HCT116 (cell line): ENCODE measurements at regions of chr3 and their contacts with region 1.

Region 1: DNA sequence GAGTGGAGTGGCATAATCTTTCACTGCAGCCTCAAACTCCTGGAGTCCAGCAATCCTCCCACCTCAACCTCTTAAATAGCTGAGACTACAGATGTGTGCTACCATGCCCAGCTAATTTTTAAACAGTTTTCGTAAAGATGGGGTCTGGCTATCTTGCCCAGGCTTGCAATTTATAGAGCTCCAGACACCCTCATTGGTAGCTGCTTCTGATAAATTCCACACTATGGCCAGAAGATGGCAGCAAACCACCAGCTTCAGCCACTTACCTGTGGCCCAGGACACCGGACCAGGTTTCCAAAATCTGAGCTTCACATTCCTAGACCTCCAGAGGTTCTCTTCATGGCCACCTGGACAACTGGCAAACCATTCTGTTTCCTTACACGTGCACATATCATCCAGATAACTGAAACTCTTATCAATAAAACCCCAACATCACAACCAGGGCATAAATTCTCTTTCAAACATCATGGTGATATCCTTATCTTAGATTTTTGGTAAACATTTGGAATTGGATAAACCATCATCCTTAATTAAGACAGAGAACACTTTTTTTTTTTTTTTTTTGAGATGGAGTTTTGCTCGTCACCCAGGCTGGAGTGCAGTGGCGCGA is 28.9 kb downstream of the FBXW12 start:
- DNase-seq: peak; percentile 69
- ATAC-seq: peak; percentile 80
- H3K4me3 ChIP-seq: no peak overlapping the region
- H3K27ac ChIP-seq: no peak overlapping the region
- H3K4me1 ChIP-seq: peaks cover 14 to 39% of the 10 kb centered on the region in 2 experiments
- H3K27me3 ChIP-seq: no peaks in the 10 kb centered on the region
- CTCF ChIP-seq: peak; percentile 69 to 97 (median 83)
- POLR2A ChIP-seq: no peak
- RAD21 ChIP-seq: peak; percentile 97

Region 2: GRCh38 chr3:48194446-48195071 is 206.4 kb before region 1 on chr3:
- CTCF ChIA-PET with region 1: interaction called, 11 read pairs
- POLR2A ChIA-PET with region 1: no interaction called
- RAD21 ChIA-PET with region 1: interaction called, 3 to 6 read pairs
- intact Hi-C with region 1: no loop called
- DNase-seq: peak; percentile 48
- ATAC-seq: peak; percentile 90
- H3K4me3 ChIP-seq: no peak overlapping the region
- H3K27ac ChIP-seq: no peak overlapping the region
- H3K4me1 ChIP-seq: peaks cover 5 to 16% of the 10 kb centered on the region in 2 experiments; a peak in 3 of 4 replicates
- H3K27me3 ChIP-seq: no peaks in the 10 kb centered on the region
- CTCF ChIP-seq: peak; percentile 81 to 94 (median 90); a peak in 5 of 6 replicates
- POLR2A ChIP-seq: no peak
- RAD21 ChIP-seq: peak; percentile 87

Region 3: DNA sequence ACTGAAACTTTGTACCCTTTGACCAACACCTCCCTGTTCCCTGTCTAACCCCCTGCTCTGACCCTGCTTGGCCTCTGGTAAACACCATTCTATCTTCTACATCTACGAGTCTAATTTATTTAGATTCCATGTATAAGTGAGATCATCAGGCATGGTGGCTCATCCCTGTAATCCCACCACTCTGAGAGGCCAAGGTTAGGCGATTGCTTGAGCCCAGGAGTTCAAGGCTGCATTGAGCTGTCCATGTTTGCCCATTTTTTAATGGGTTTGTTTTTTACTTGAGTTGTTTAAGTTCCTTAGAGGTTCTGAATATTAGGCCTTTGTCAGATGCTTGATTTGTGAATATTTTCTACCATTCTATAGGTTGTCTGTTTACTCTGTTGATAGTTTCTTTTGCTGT is 12.0 kb before region 1 on chr3:
- CTCF ChIA-PET with region 1: interaction called, 11 read pairs
- POLR2A ChIA-PET with region 1: no interaction called
- RAD21 ChIA-PET with region 1: no interaction called
- intact Hi-C with region 1: no loop called
- DNase-seq: no peak
- ATAC-seq: no peak
- H3K4me3 ChIP-seq: no peak overlapping the region
- H3K27ac ChIP-seq: no peak overlapping the region
- H3K4me1 ChIP-seq: no peaks in the 10 kb centered on the region
- H3K27me3 ChIP-seq: no peaks in the 10 kb centered on the region
- CTCF ChIP-seq: no peak
- POLR2A ChIP-seq: no peak
- RAD21 ChIP-seq: no peak

Region 4: DNA sequence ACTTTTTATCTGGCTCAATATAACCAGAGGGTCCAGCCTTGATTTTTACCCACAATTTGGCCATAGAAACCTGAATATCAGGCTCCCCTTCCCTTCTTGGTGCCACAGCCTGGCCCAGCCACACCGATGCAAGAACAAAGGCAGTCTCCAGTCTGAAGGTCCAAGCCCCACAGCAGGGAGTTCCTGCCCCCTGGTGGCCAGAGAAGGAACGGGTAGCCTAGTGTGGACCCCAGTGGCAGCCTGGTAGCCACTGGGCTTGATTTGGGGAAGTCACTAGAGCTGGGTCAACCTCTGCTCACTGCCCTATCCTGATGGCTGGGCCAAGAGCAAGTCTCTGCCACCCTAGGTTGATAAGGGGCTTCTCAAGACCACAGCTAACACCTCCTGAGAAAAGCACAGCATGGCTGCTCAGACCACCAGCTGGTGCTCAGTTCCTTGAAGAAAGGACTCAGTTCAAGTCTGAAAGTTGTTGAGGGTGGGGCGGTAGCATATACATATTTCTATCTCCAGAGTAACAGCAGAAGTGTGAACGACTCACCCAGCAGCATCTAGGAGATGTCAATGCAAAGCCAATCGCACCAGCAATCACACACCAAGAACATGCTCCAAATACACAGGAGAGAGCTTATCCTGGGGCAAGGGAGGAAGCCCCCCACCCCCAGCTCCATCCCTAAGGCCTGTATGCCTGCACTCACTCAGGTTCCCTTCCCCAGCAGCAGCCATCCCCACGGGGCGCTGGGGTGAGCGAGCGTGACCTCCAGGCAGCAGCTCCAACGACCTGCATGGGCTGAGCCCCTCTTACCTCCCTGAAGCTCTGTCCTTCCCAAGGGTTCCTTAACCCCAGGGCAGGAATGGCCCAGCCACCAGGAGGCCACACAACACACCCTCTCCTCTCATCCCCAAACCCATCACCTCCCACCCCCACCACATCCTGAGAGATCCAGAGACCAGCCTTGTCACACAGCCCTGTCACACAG is 148.1 kb after region 1 on chr3:
- CTCF ChIA-PET with region 1: interaction called, 30 read pairs
- POLR2A ChIA-PET with region 1: no interaction called
- RAD21 ChIA-PET with region 1: interaction called, 3 to 10 read pairs
- intact Hi-C with region 1: loop called (anchors 2 kb)
- DNase-seq: peak; percentile 54
- ATAC-seq: peak; percentile 99
- H3K4me3 ChIP-seq: no peak overlapping the region
- H3K27ac ChIP-seq: no peak overlapping the region
- H3K4me1 ChIP-seq: peaks cover 0 to 6% of the 10 kb centered on the region in 2 experiments; a peak in 1 of 4 replicates
- H3K27me3 ChIP-seq: no peaks in the 10 kb centered on the region
- CTCF ChIP-seq: peak in 2 of 3 experiments; percentile 94 to 98; a peak in 4 of 6 replicates
- POLR2A ChIP-seq: no peak
- RAD21 ChIP-seq: no peak

Region 5: GRCh38 chr3:48635222-48636021 is 234.5 kb after region 1 on chr3 and contains the start of gene SLC26A6:
- CTCF ChIA-PET with region 1: interaction called, 14 read pairs
- POLR2A ChIA-PET with region 1: no interaction called
- RAD21 ChIA-PET with region 1: interaction called in 1 of 2 experiments, 3 read pairs
- intact Hi-C with region 1: no loop called
- DNase-seq: peak; percentile 88
- ATAC-seq: peak; percentile 92
- H3K4me3 ChIP-seq: peak within 1 kb of the TSS; percentile 87 to 94
- H3K27ac ChIP-seq: peak within 1 kb of the TSS; percentile 73
- H3K4me1 ChIP-seq: peaks cover 11 to 22% of the 10 kb centered on the region in 2 experiments
- H3K27me3 ChIP-seq: no peaks in the 10 kb centered on the region
- CTCF ChIP-seq: peak in 2 of 3 experiments; percentile 80 to 82; a peak in 4 of 6 replicates
- POLR2A ChIP-seq: peak; percentile 35
- RAD21 ChIP-seq: no peak
- total RNA-seq, gene SLC26A6: 55.1 TPM

Region 6: DNA sequence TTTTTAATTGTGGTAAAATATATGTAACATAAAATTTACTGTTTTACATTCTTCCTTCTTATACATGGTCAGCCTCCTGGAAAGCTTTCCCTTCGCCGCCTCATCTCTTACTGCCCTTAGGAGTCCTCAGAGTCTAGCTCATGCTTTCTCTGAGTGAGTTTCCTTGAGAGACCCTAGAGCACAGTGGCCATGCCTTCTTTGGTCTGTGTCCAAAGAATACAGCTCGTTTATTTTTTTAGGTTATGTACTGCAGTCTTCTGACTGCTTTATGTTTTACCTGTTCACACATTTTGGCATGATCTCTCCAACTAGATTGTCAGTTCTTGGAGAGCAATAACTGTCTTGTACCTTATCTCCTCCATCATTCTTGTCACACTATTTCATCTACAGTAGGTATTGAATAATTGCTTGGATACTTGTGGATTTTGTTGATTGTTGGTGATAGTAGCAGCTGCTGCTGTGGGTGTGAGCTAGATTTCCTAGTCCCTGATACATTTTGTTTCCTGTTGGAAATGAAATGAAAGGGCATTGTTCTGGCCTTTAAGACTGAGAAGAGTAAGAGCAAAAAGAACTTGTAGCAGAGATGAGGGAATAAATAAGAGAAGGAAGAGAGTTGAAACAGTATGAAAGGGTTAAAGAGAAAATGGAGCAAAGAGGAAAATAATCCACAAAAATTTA is 528.6 kb after region 1 on chr3:
- CTCF ChIA-PET with region 1: no interaction called
- POLR2A ChIA-PET with region 1: no interaction called
- RAD21 ChIA-PET with region 1: no interaction called
- intact Hi-C with region 1: no loop called
- DNase-seq: no peak
- ATAC-seq: no peak
- H3K4me3 ChIP-seq: no peak overlapping the region
- H3K27ac ChIP-seq: no peak overlapping the region
- H3K4me1 ChIP-seq: peaks cover 15 to 25% of the 10 kb centered on the region in 2 experiments
- H3K27me3 ChIP-seq: no peaks in the 10 kb centered on the region
- CTCF ChIP-seq: no peak
- POLR2A ChIP-seq: no peak
- RAD21 ChIP-seq: no peak